Left cardiac atrium (tissue), 4 donors: ENCODE measurements at regions of chr3 and their contacts with region 1.

Region 1: DNA sequence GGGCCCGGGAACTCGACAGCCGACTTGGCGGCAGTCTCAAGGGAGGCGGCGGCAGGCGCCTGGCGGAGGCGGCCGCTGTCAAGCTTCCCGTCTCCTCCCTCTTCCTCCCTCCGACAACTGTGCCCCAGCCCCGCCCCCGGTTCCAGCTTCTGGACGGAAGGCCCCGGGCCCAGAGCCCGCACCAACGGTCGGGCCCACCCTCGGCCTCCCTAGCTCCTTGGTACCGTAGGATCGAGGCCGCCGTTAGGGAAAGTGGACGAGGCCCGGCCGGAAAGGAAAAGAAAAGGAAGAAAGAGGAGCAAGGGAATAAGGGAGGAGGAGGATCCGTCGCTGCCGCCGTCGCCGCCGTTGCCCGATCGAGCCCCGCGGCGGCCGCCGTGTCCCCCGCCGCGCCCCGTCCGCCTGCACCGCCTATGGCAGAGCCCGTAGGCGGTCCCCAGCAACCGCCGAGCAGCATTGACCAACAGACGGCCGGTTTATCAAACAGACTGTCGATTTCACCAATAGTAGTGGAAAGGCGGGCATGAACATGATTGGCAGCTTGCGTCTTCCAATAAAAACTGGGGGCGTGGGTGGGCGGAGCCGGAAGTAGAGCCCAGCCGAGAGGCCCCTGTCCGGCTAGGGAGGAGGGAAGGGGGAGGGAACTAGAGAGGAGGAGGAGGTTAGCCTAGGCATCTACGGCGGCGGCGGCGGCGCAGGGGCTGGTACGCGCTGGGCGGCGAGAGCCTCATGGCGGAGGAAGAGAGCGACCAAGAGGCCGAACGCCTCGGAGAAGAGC is at the starts of genes CGGBP1 and ZNF654:
- DNase-seq: peak; percentile 98
- ATAC-seq: peak; percentile 95 to 97
- total RNA-seq, gene CGGBP1: 41.1 to 42.2 TPM
- total RNA-seq, gene ZNF654: 10.4 to 11.4 TPM

Region 2: DNA sequence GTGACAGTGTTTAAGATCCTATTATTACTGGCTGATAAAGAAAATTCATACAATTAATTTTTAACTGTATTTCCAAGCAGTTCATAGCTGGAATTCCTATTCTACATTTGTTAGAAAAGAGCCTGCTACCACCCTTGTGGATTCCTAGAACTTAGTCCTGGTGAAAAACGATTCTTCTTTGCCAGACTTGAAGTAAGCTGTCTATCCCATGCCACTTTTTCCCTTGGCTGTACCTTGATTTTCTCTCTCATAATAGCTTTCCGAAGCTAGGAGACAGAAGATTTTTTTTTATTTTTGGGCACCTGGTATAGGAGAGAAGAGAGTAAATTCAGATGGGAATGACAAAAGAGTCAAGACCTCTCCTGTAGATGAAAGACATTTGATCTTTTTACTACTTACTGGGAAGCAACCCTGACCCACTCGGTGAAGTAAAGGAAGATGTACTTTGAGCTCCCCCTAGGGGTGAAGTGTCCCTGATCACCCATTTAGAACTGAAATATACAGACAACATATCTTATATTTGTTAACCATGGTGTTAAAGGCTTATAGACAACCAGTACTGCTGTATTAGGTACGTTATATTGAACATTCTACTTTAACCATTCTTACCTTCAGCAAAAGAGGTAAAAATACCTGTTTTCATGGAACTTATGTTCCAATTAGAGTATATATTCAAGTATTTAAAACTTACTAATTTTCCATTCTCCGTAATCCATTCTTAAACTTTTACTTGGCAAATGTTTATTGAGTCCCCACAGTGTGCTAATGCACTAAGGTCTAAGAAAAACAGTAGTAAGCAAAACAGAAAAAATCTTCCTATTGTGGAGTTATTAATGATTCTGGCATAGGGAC is 54.8 kb after region 1 on chr3:
- intact Hi-C with region 1: loop called in 1 of 2 experiments (anchors 5 kb)
- DNase-seq: peak; percentile 23
- ATAC-seq: peak; percentile 86 to 90